PC-9 (cell line): ENCODE measurements at regions of chr10 and their contacts with region 1.

Region 1: GRCh38 chr10:6228010-6228511 is 25.3 kb downstream of the PFKFB3 start:
- DNase-seq: no peak
- H3K4me3 ChIP-seq: no peak overlapping the region
- H3K27ac ChIP-seq: no peak overlapping the region
- H3K4me1 ChIP-seq: no peaks in the 10 kb centered on the region
- H3K27me3 ChIP-seq: no peaks in the 10 kb centered on the region
- CTCF ChIP-seq: no peak

Region 2: DNA sequence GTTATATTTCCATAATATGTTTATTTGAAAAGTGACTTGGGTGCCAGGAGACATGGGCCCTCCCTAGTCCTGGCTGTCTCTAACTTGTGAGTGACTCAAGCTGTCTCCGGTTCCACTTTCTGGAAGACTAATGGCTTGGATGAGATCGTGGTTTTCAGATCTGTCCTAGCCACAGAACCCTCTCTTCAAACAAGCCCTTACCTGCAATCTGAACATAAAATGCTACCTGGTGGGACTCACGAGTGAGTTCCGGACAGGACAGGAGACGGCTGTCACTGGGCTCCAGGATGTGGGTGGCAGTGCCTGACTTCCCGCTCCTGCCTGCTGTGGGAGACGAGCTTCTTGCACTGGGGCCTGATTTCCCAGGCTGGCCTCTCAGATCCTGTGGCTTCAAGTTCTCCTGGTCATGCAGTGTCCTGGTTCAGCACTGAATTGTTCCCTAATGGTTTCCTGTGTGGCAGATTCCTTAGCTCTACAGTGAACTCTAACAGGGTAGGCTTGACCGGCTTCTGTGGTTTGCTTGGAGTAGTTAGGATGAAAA is 51.3 kb before region 1 on chr10:
- CTCF ChIA-PET with region 1: no interaction called
- POLR2A ChIA-PET with region 1: no interaction called
- intact Hi-C with region 1: no loop called
- DNase-seq: no peak
- H3K4me3 ChIP-seq: no peak overlapping the region
- H3K27ac ChIP-seq: no peak overlapping the region
- H3K4me1 ChIP-seq: no peaks in the 10 kb centered on the region
- H3K27me3 ChIP-seq: no peaks in the 10 kb centered on the region
- CTCF ChIP-seq: no peak

Region 3: GRCh38 chr10:6343305-6344010 is 115.4 kb after region 1 on chr10:
- CTCF ChIA-PET with region 1: no interaction called
- POLR2A ChIA-PET with region 1: interaction called, 14 read pairs
- intact Hi-C with region 1: no loop called
- DNase-seq: no peak
- H3K4me3 ChIP-seq: no peak overlapping the region
- H3K27ac ChIP-seq: no peak overlapping the region
- H3K4me1 ChIP-seq: no peaks in the 10 kb centered on the region
- H3K27me3 ChIP-seq: no peaks in the 10 kb centered on the region
- CTCF ChIP-seq: no peak

Region 4: GRCh38 chr10:6382081-6382480 is 154.0 kb after region 1 on chr10:
- CTCF ChIA-PET with region 1: no interaction called
- POLR2A ChIA-PET with region 1: no interaction called
- intact Hi-C with region 1: no loop called
- DNase-seq: no peak
- H3K4me3 ChIP-seq: no peak overlapping the region
- H3K27ac ChIP-seq: no peak overlapping the region
- H3K4me1 ChIP-seq: no peaks in the 10 kb centered on the region
- H3K27me3 ChIP-seq: no peaks in the 10 kb centered on the region
- CTCF ChIP-seq: no peak

Region 5: DNA sequence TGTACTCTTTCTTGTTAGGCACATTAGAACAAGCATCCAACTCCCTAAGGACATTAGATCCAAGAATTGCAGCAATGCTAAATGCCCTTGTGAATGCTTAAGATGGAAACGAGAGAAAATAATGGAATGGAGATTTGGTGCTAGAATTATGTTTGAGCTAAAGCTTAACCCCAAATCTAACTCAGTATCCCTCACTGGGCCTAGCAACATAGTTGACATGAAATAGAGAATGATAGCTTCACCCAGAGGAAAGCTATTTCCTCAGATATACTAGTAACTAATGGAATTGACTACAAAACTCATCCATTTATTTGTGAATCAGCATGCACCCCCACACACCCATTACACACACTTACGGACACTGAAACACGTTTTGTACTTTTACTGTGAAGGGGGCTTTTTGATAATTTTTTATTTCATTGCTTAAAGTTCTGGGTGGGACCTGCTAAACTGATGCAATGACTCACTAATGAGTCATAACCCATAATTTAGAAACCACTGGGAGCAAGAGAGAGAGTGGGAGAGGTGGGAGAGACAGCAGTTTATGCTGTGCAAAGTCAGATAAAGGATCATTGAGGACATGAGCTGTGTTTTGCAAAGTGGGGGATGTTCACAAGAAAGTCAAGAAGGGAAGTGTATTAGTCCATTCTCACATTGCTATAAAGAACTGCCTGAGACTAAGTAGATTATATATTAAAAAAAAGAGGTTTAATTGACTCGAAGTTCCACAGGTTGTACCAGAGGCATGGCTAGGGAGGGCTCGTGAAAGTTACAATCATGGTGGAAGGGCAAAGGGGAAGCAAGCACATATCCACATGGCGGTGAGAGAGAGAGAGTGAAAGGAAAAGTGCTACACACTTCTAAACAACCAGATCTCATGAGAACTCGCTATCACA is 800.1 kb after region 1 on chr10:
- CTCF ChIA-PET with region 1: no interaction called
- POLR2A ChIA-PET with region 1: no interaction called
- intact Hi-C with region 1: no loop called
- DNase-seq: no peak
- H3K4me3 ChIP-seq: no peak overlapping the region
- H3K27ac ChIP-seq: no peak overlapping the region
- H3K4me1 ChIP-seq: no peaks in the 10 kb centered on the region
- H3K27me3 ChIP-seq: no peaks in the 10 kb centered on the region
- CTCF ChIP-seq: no peak